Body of pancreas (tissue), 4 donors: ENCODE measurements at regions of chr7 and their contacts with region 1.

Region 1: GRCh38 chr7:73809467-73809951 is 21.3 kb upstream of the CLDN4 start:
- DNase-seq: no peak
- ATAC-seq: no peak
- H3K4me3 ChIP-seq: no peak overlapping the region
- H3K27ac ChIP-seq: no peak overlapping the region
- H3K4me1 ChIP-seq: peaks cover 11% of the 10 kb centered on the region
- H3K27me3 ChIP-seq: no peaks in the 10 kb centered on the region
- CTCF ChIP-seq: no peak
- POLR2A ChIP-seq: no peak

Region 2: DNA sequence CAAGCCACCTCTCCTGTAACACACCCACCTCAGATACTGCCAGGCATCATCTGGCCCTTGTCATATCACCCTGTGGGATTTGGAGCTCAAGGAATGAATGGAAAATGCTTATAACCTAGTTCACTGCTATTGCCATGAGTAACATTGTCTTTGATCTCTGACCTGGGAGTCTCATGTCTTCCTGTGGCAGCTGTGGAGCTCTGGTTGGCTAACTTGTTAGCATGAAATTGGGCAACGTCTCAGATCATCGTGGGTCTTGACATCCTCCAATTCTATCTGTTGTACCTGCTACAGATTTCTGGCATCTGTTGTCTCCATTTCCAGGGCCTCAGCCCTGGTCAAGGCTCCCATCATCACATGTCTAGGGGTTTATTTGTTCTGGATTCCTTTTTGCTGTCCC is 49.3 kb after region 1 on chr7:
- intact Hi-C with region 1: loop called (anchors 5 kb)
- DNase-seq: no peak
- ATAC-seq: no peak
- H3K4me3 ChIP-seq: no peak overlapping the region
- H3K27ac ChIP-seq: no peak overlapping the region
- H3K4me1 ChIP-seq: peaks cover 8% of the 10 kb centered on the region
- H3K27me3 ChIP-seq: no peaks in the 10 kb centered on the region
- CTCF ChIP-seq: no peak
- POLR2A ChIP-seq: no peak